Heart left ventricle (tissue), 16 donors: ENCODE measurements at regions of chr5 and their contacts with region 1.

Region 1: DNA sequence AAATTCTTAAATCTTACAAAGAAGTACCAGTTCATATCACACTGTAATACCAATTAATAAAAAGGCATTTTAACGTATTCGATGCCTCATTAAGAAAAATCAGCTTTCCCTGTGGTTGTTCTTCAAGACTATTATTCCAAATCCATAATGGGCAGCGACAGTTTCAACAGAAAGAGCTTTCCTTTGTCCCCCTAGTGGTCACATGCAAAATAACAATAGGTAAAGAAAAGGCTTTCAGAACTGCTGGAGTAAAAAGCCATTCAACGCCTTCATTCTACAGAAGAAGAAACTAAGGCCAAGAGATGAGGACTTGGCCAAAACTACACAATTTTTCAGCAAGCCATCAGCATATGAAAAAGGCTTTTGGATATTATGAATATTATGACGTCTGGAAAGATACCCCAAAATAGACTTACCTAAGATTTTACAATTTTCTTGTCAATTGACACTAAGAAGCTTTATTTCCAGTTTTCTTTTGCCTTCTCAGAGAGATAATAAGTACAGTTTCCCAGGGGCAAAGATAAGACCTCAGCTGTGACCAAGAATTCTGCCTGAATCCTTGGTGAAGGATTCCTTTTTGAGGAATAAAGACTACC is 6.7 kb upstream of the CDH6 start:
- DNase-seq: no peak
- ATAC-seq: no peak
- H3K4me3 ChIP-seq: no peak overlapping the region
- H3K27ac ChIP-seq: no peak overlapping the region
- H3K4me1 ChIP-seq: no peaks in the 10 kb centered on the region
- H3K27me3 ChIP-seq: peaks cover 0 to 6% (median 0%) of the 10 kb centered on the region in 9 donors
- CTCF ChIP-seq: peak; percentile 56 to 84 (median 74)
- POLR2A ChIP-seq: no peak

Region 2: DNA sequence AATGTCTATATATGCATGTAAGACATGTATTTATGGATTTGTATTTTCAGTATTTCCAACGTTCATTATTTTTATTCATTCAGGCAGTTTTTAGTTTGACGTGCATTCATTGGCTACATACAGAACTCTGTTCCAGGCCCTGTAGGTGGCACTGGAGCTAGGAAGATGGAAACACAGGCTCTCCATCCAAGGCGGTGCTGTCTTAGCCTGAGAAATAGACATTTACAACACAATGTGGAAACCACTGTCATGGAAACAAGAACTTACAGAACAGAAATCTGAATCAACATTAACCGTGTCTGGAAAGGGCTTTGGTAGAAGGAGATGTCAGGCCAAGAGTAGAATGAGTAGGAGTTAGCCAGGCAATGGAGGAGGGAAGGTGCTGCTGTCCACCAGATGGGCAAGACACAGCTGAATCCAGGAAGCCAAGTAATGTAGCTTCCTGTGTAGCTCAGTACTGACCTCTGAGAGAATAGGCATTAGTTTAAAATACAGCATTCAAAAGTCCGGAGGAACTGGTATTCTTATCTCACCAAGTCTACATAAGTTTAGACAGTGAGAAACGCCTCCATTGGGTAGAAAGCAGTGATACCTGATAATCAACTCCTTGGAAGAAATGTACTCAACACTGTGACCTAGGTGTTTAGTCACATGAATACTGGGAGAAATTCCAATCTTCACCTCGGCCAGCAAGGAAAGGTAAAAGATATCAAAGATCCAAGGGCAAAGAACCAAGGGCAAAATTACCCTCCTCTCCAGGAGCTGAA is 381.8 kb before region 1 on chr5:
- intact Hi-C with region 1: loop called in 9 of 10 experiments (anchors 1 to 5 kb)
- DNase-seq: peak in 3 of 5 donors; percentile 10 to 44 (median 19)
- ATAC-seq: peak in 3 of 4 donors; percentile 75 to 81 (median 76)
- H3K4me3 ChIP-seq: no peak overlapping the region
- H3K27ac ChIP-seq: no peak overlapping the region
- H3K4me1 ChIP-seq: no peaks in the 10 kb centered on the region
- H3K27me3 ChIP-seq: no peaks in the 10 kb centered on the region
- CTCF ChIP-seq: peak; percentile 8 to 63 (median 44)
- POLR2A ChIP-seq: no peak